ENCODE measurements at regions of chr10 and their contacts with region 1.

Region 1: GRCh38 chr10:21173812-21174714 is 277.0 kb upstream of the NEBL start:
- DNase-seq: peak; percentile 71 to 90
- H3K4me3 ChIP-seq: peak overlapping the region; percentile 81
- H3K27ac ChIP-seq: peak overlapping the region; percentile 94
- H3K4me1 ChIP-seq: peaks cover 31% of the 10 kb centered on the region
- H3K27me3 ChIP-seq: no peaks in the 10 kb centered on the region
- CTCF ChIP-seq: no peak; the same call in 1 of the 2 replicates

Region 2: DNA sequence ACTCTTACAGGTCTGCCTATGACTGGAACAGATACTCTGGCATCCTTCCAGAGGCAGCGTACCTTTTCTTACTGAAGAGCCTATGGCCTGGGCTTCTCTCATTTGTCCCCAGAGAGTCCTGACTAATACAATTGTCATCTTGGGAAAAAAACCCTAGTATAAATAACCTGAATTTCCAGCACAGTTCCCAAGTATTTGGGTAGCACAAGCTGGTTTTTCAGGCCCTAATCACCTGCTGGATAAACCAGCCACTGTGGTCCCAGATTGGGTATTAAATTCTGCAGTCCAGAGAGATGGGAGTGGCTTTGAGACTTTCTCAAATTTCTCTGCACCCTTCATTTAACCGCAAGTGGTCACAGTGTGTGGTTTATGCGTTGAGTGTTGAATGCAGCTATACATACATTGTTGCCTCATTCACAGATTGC is 90.2 kb before region 1 on chr10:
- CTCF ChIA-PET with region 1: no interaction called
- POLR2A ChIA-PET with region 1: no interaction called
- intact Hi-C with region 1: loop called (anchors 5 kb)
- DNase-seq: peak; percentile 75 to 97
- H3K4me3 ChIP-seq: no peak overlapping the region
- H3K27ac ChIP-seq: peak overlapping the region; percentile 80
- H3K4me1 ChIP-seq: peaks cover 21% of the 10 kb centered on the region
- H3K27me3 ChIP-seq: no peaks in the 10 kb centered on the region
- CTCF ChIP-seq: no peak

Region 3: DNA sequence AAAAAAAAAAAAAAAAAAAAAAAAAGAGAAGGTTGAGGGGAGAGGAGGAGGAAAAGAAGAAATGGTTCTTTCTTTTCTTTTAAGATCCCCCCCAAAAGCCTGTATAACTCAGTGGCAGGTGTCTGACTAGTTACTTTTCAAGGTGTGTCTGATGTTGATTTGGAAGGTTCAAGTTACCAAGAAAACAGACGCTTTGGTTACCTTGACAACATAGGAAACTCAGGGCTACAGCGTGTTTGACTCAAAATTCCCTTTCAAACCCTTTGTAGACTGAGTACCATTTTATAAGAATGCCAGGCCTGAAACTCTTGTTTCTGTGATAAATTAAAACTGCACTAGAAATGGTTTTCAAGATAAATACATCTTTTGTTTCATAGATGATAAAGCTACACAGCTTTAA is 64.7 kb after region 1 on chr10:
- CTCF ChIA-PET with region 1: no interaction called
- POLR2A ChIA-PET with region 1: interaction called, 11 read pairs
- intact Hi-C with region 1: loop called (anchors 1 kb)
- DNase-seq: no peak
- H3K4me3 ChIP-seq: no peak overlapping the region
- H3K27ac ChIP-seq: peak overlapping the region; percentile 78
- H3K4me1 ChIP-seq: peaks cover 25% of the 10 kb centered on the region
- H3K27me3 ChIP-seq: no peaks in the 10 kb centered on the region
- CTCF ChIP-seq: no peak

Region 4: DNA sequence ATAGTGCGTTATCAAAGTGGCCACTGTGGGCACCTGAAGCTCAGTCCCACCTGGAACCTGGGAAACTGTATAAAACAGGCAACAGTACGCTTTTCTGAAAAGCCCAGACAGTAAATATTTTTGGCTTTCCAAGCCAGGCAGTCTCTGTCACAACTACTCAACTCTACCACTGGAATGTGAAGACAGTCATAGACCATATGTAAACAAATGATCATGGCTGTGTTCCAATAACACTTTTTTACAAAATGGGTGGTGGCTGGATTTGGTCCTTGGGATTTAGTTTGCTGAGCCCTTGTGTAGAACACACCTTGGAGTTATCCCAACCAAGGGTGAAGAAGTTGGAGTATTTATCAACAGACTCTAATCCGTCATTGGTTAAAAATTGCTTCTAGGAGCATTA is 91.6 kb after region 1 on chr10:
- CTCF ChIA-PET with region 1: no interaction called
- POLR2A ChIA-PET with region 1: no interaction called
- intact Hi-C with region 1: loop called (anchors 1 kb)
- DNase-seq: peak; percentile 31 to 85
- H3K4me3 ChIP-seq: no peak overlapping the region
- H3K27ac ChIP-seq: peak overlapping the region; percentile 61
- H3K4me1 ChIP-seq: peaks cover 24% of the 10 kb centered on the region
- H3K27me3 ChIP-seq: no peaks in the 10 kb centered on the region
- CTCF ChIP-seq: no peak

Region 5: DNA sequence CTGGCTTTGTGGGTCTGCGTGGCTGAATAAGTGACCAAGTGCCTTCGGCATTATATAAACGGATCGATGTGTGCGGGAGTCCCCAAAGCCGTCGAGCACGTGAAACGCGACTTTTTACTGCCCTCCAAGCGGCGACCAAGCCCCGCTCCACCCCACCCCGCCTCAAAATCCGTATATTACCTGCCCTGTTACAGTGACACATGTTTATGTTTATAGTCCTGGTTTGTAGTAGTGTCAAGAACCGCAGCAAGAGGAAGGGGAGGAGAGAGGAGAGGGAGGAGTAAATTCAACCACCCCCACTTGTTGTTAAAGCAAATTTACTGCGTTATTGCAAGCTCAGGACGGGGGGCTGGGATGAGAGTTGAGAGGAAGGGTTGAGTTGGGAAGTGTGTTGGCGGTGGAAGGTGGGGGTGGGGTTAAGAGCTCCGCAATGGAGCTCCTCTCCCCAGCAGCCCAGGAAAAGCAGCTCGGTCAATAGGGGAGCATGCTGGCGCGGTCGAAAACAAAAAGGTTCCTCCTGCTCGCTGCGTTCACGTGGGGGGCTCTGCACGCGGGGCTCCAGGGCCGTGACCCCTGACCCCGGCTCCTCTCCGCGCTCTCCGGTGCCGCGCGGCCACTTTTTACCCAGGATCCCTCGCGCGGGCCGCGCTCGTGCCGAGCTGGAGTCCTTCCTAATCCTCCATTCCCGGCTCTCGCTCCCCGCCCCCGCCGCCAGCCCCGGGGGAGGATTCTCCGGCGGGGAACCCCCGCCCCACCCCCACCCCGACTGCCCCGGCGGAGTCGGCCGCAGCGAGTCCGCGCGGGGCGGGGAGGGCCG is 351.5 kb after region 1 on chr10 and contains the start of gene SKIDA1:
- CTCF ChIA-PET with region 1: no interaction called
- POLR2A ChIA-PET with region 1: no interaction called
- intact Hi-C with region 1: loop called (anchors 5 kb)
- DNase-seq: peak; percentile 85
- H3K4me3 ChIP-seq: peak within 1 kb of the TSS; percentile 71
- H3K27ac ChIP-seq: peak within 1 kb of the TSS; percentile 79
- H3K4me1 ChIP-seq: peaks cover 32% of the 10 kb centered on the region
- H3K27me3 ChIP-seq: no peaks in the 10 kb centered on the region
- CTCF ChIP-seq: no peak
- total RNA-seq, gene SKIDA1: 0.65 and 1.1 TPM in 2 replicates

Measured in PC-9 (cell line).